ENCODE measurements at regions of chr1 and their contacts with region 1.

Region 1: DNA sequence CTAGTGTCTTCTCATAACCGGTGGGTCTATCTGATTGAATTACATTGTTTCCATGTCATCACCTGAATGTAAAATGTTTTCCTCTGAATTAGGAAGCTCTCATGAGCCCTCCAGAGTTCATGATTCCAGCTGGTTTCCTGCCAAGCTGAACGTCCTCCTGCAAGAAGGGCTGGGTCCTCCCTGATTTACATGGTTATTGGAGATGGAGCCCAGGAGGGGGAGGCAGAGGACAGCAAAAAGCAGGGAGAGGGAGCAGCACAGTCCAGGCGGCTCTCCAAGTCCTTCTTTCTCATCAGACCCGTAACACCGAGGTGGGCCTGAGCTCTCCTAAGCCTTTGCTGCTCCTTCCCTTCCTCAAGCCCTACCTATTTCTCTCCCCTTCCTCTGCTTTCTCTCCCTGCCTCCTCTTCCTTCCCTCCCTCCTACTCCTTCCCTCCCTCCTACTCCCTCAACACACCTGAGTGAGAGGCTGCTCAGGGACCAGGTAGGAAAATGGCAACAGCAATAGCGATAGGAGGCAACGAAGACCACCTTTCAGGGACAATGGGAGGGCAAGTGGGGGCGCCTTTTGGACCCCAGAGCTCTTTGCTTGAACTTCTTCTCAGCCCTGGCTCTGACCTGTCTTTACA is 265.9 kb downstream of the PRDM2 start:
- DNase-seq: peak; percentile 74
- ATAC-seq: peak; percentile 99
- H3K4me3 Mint-ChIP-seq: no peak overlapping the region
- H3K27ac Mint-ChIP-seq: no peak overlapping the region
- H3K4me1 Mint-ChIP-seq: no peaks in the 10 kb centered on the region; the same call in 1 of the 2 replicates
- H3K27me3 Mint-ChIP-seq: peaks cover 33% of the 10 kb centered on the region
- CTCF ChIP-seq: peak; percentile 28; the same call in 1 of the 2 replicates

Region 2: DNA sequence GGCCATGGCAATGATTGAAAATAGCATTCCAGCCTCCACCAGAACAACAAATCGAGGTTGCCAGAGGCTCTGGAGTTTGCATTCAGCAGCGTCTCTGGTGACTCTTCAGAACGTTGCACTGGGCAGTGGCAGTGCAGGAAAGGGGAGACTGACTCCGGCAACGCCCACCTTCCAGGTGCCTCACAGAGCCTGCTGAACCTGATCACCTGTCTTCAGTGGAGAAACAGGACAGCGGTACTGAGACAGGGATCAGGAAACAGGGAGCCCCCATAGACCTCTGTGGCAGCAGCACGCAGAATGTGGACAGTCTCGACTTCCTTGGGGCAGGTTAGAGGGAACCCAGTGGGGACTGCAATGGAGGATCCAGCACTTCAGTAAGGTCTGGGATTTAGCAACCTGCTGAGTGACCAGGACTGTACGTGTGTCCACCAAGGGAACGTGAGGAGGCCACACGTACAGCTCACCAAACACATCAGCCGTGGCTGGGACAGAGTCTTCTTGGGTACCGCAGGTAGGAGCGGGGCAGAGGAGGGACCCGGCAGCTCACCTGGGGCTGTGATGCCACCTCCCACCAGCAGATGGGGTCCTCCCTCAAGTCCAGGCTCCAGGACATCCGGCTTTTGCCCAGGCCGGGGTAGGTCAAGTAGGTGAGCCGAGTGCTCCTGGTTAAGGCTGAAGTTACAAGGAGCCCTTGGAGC is 137.3 kb before region 1 on chr1:
- CTCF ChIA-PET with region 1: interaction called, 28 read pairs
- POLR2A ChIA-PET with region 1: no interaction called
- DNase-seq: peak; percentile 88
- ATAC-seq: peak; percentile 99
- H3K4me3 Mint-ChIP-seq: no peak overlapping the region
- H3K27ac Mint-ChIP-seq: no peak overlapping the region
- H3K4me1 Mint-ChIP-seq: peaks cover 3% of the 10 kb centered on the region; the same call in 1 of the 2 replicates
- H3K27me3 Mint-ChIP-seq: peaks cover 18% of the 10 kb centered on the region; the same call in 1 of the 2 replicates
- CTCF ChIP-seq: peak; percentile 76

Region 3: GRCh38 chr1:13950637-13951036 is 15.2 kb before region 1 on chr1:
- CTCF ChIA-PET with region 1: interaction called, 16 read pairs
- POLR2A ChIA-PET with region 1: no interaction called
- DNase-seq: peak; percentile 75
- ATAC-seq: peak; percentile 99
- H3K4me3 Mint-ChIP-seq: no peak overlapping the region
- H3K27ac Mint-ChIP-seq: no peak overlapping the region
- H3K4me1 Mint-ChIP-seq: no peaks in the 10 kb centered on the region
- H3K27me3 Mint-ChIP-seq: peaks cover 22% of the 10 kb centered on the region
- CTCF ChIP-seq: peak; percentile 61

Region 4: DNA sequence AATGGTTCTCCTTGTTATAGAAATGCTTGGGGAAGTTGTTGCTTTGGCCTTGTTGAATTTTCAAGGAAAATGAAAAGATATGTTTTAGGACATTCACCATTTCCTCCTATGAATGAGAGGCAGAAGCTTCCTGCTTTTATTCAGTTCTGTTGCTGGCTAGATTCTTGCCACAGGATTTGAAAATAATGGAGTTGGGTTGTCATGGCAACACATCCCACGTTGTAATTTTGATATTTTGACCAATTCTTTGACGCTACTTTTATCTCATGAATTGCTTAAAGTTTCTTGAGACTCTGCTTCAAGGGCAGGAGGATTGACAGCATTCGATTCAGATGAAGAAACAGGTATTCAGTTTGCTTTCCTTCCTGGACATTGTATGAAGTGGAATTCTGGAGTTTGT is 65.6 kb after region 1 on chr1:
- CTCF ChIA-PET with region 1: no interaction called
- POLR2A ChIA-PET with region 1: no interaction called
- DNase-seq: no peak
- ATAC-seq: no peak
- H3K4me3 Mint-ChIP-seq: no peak overlapping the region
- H3K27ac Mint-ChIP-seq: no peak overlapping the region
- H3K4me1 Mint-ChIP-seq: no peaks in the 10 kb centered on the region
- H3K27me3 Mint-ChIP-seq: peaks cover 46% of the 10 kb centered on the region
- CTCF ChIP-seq: no peak

Region 5: GRCh38 chr1:14415395-14415794 is 449.5 kb after region 1 on chr1:
- CTCF ChIA-PET with region 1: interaction called, 16 read pairs
- POLR2A ChIA-PET with region 1: no interaction called
- DNase-seq: peak; percentile 77
- ATAC-seq: peak; percentile 98
- H3K4me3 Mint-ChIP-seq: no peak overlapping the region
- H3K27ac Mint-ChIP-seq: no peak overlapping the region
- H3K4me1 Mint-ChIP-seq: peaks cover 4% of the 10 kb centered on the region
- H3K27me3 Mint-ChIP-seq: peaks cover 7% of the 10 kb centered on the region
- CTCF ChIP-seq: peak; percentile 28; the same call in 1 of the 2 replicates

Region 6: DNA sequence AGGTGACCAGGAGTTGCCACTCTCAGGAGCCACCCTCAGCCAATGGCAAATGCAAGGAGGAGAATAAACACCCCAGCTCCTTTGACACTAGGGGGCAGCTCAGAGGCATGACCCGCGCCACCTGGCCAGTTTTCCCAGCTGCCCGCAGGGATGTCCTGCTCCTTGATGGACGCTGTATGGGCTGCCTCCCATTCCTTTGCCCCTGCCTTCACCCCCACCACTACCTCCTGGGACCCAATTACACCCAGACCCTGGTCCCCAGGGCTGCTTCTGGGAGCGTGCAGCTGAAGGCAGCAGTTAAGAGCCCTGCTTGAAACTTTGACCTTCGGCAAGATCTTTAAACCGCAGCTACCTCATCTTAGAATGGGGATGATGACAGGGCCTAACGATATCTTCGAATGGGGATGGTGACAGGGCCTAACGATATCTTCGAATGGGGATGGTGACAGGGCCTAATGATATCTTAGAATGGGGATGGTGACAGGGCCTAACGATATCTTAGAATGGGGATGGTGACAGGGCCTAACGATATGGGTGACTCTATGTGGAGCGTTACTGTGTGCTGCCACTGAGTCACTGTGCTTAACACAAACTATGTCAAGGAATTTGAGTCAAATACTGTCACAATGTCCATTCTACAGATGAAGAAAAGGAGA is 469.6 kb after region 1 on chr1:
- CTCF ChIA-PET with region 1: interaction called, 14 read pairs
- POLR2A ChIA-PET with region 1: no interaction called
- DNase-seq: peak; percentile 72
- ATAC-seq: peak; percentile 97
- H3K4me3 Mint-ChIP-seq: no peak overlapping the region
- H3K27ac Mint-ChIP-seq: no peak overlapping the region
- H3K4me1 Mint-ChIP-seq: no peaks in the 10 kb centered on the region
- H3K27me3 Mint-ChIP-seq: peaks cover 11% of the 10 kb centered on the region
- CTCF ChIP-seq: peak; percentile 50

Region 7: DNA sequence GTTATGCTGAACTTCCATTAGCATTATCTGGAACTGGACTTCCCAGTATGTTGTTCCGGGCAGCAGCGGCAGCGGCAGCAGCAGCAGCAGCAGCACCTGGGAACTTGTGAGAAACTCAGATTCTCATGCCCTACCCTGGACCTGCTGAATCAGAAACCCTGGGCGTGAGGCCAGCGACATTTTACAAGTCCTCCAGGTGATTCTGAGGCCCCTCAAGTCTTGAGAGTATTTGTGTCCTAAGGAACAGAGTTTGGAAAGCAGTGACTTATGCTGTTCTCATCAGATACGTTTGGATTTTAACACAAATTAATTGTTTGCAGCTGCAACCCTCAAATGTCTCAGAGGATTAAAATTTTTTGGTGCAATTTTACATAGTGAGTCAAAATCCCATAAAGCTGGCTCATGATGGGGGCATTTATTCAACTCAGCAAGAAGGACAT is 475.4 kb after region 1 on chr1:
- CTCF ChIA-PET with region 1: interaction called, 11 read pairs
- POLR2A ChIA-PET with region 1: no interaction called
- DNase-seq: no peak
- ATAC-seq: no peak
- H3K4me3 Mint-ChIP-seq: no peak overlapping the region
- H3K27ac Mint-ChIP-seq: no peak overlapping the region
- H3K4me1 Mint-ChIP-seq: peaks cover 2% of the 10 kb centered on the region; the same call in 1 of the 2 replicates
- H3K27me3 Mint-ChIP-seq: peaks cover 9% of the 10 kb centered on the region
- CTCF ChIP-seq: no peak

Measured in WTC11 (cell line).